ENCODE measurements at regions of chr15 and their contacts with region 1.

Region 1: DNA sequence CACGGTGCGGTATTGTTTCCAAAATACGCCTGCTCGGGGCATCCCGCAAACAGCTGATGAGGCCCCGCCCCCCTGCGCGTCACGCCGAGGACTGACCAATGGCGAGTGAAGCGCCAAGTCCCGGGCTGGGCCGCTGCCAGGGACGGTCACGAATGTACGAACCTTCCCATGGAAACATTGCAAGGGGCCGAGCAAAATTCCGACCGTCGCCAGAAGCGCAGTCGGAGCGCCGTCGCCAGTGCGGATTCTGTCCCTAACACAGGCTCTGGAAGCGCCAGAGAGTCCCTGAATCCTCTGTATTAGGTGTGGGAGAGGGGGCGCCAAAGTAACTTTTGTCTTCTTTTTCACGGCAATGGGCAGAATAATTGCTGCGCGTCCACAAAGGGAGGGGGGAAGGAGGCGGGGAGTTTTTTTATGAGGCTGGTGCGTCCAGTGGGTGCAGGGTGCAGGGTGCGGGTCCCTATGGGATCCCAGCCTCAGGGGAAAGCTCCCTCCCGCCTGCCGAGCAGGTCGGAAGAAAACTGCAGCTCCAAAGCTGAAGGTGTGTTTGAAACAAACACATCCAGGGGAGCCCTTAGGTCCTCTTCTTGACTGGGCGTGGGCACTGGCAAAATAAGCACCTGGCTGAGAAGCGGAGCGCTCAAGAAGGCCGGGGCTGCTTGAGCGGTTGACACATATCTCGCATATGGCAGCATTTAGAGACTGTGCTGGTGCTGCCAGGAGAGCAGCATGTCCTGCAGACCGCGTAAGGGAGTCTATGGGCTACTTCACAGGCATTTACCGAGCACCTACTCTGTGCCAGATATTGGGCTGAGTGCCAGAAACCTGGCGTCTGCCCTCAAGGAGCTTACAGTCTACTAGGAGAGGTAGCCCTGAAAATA is at the start of gene BMF:
- DNase-seq: peak; percentile 97
- ATAC-seq: peak; percentile 49
- H3K4me3 Mint-ChIP-seq: peak within 1 kb of the TSS; percentile 94
- H3K27ac Mint-ChIP-seq: peak within 1 kb of the TSS; percentile 92
- H3K4me1 Mint-ChIP-seq: peaks cover 60% of the 10 kb centered on the region
- H3K27me3 Mint-ChIP-seq: no peaks in the 10 kb centered on the region
- CTCF ChIP-seq: no peak
- total RNA-seq, gene BMF: 353 and 376 TPM in 2 replicates

Region 2: DNA sequence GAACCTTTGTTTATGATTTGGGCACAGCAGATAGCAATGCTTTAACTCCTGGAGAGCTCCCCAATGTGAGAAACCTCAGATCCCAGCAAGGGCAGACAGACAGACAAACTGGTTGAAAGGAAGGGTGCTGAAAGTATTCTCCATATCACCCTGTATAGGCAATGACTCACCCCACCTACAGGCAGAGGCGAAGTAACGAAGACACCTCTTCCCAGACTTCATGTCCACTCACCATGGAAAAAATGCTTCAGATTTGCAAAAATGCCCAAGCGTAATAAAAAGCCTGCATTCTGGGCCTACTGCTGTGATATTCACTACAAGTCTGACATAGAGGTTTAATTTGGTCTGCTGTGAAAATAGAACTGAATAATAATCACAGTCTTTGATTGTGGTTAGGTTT is 477.7 kb before region 1 on chr15:
- CTCF ChIA-PET with region 1: no interaction called
- POLR2A ChIA-PET with region 1: no interaction called
- intact Hi-C with region 1: no loop called
- DNase-seq: no peak
- ATAC-seq: no peak
- H3K4me3 Mint-ChIP-seq: no peak overlapping the region
- H3K27ac Mint-ChIP-seq: no peak overlapping the region
- H3K4me1 Mint-ChIP-seq: no peaks in the 10 kb centered on the region
- H3K27me3 Mint-ChIP-seq: no peaks in the 10 kb centered on the region
- CTCF ChIP-seq: no peak

Region 3: DNA sequence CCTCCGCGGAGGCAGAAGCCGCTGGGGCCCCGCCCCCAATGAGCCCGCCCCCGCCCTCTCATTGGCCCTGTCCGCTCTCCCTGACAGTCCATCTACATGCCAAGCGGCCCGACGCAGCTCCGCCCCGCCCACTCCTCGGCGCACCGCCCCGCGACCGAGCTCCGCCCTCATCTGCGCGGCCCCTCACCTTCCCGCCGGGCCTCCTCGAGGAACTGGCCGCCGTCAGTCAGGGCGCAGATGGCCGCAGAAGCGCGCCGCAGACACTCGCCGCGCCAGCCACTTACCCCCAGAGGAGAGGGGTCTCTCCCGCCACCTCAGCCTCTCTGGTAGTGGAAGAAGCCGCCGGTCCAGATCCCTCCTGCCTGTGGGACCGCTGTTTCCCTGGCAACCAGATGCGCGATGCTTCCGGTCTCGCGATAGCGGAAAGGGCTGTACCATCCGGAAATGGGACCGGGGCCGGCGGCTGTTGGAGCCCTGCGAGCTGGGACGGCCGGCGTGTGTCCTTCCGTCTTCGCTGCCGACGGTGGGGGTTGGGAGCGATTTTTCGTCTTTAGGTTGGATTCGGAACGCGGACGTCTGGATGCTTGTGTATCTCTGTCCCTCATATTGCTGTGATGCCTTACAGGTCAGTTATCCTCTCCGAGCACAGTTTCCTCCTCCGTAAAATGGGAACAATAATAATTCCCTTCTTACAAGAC is 326.5 kb before region 1 on chr15 and contains the start of gene FSIP1:
- CTCF ChIA-PET with region 1: no interaction called
- POLR2A ChIA-PET with region 1: interaction called, 7 read pairs
- intact Hi-C with region 1: loop called (anchors 1 kb)
- DNase-seq: peak; percentile 98
- ATAC-seq: peak; percentile 98
- H3K4me3 Mint-ChIP-seq: peak within 1 kb of the TSS; percentile 98
- H3K27ac Mint-ChIP-seq: peak within 1 kb of the TSS; percentile 91
- H3K4me1 Mint-ChIP-seq: peaks cover 41% of the 10 kb centered on the region
- H3K27me3 Mint-ChIP-seq: peaks cover 4% of the 10 kb centered on the region
- CTCF ChIP-seq: no peak
- total RNA-seq, gene FSIP1: 0.32 and 0.53 TPM in 2 replicates

Region 4: DNA sequence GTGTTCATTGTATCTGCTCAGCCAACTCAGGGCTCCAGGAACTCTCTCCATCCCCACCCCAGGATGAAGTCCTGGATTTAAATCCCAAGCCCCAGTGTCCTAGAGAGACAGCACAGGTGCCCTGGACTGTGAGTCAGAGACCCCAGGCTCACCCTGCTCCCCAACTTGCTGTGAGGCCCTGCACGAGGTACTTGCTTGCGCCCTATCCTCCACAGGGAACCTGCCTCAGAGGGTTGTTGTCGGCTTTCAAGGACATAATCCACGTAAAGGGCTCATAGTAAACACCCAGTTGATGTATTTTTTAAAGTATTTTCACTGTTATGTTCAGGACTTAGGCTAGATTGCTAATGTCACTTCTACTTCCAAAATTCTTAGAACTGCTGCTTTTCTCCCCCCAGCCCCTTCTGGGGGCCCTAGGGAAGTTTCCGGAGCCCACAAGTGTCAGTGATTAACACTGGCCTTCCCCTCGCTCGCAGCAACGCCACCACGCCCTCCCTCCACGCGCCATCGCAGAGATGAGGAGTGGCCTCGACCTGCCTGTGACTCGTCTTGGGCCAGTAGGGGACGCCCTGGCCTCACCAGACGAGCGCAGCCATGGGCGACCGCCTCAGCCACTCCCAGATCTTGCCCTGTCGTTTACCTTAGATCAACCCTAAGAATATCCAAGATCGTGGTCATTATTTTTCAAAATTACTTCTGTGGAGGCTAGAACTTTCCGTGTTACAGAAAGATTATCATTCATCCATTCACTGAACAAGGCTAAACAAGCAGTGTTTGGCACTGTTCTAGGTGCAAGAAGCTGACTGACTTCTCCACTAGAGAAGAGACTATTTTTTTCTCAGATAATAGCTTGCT is 64.2 kb before region 1 on chr15:
- CTCF ChIA-PET with region 1: interaction called, 519 read pairs
- POLR2A ChIA-PET with region 1: interaction called, 1,329 read pairs
- intact Hi-C with region 1: loop called (anchors 1 kb)
- DNase-seq: peak; percentile 77
- ATAC-seq: peak; percentile 87
- H3K4me3 Mint-ChIP-seq: peak overlapping the region; percentile 46
- H3K27ac Mint-ChIP-seq: peak overlapping the region; percentile 93
- H3K4me1 Mint-ChIP-seq: peaks cover 64% of the 10 kb centered on the region
- H3K27me3 Mint-ChIP-seq: no peaks in the 10 kb centered on the region
- CTCF ChIP-seq: peak; percentile 58

Region 5: GRCh38 chr15:40069178-40070165 is 39.6 kb before region 1 on chr15:
- CTCF ChIA-PET with region 1: interaction called, 9 read pairs
- POLR2A ChIA-PET with region 1: interaction called, 504 read pairs
- intact Hi-C with region 1: loop called (anchors 1 kb)
- DNase-seq: peak; percentile 59
- ATAC-seq: peak; percentile 76
- H3K4me3 Mint-ChIP-seq: peak overlapping the region; percentile 60
- H3K27ac Mint-ChIP-seq: peak overlapping the region; percentile 83
- H3K4me1 Mint-ChIP-seq: peaks cover 48% of the 10 kb centered on the region
- H3K27me3 Mint-ChIP-seq: no peaks in the 10 kb centered on the region
- CTCF ChIP-seq: no peak

Region 6: GRCh38 chr15:40098489-40099261 is 10.4 kb before region 1 on chr15:
- CTCF ChIA-PET with region 1: interaction called, 98 read pairs
- POLR2A ChIA-PET with region 1: interaction called, 422 read pairs
- intact Hi-C with region 1: loop called (anchors 1 kb)
- DNase-seq: peak; percentile 74
- ATAC-seq: peak; percentile 78
- H3K4me3 Mint-ChIP-seq: peak overlapping the region; percentile 77
- H3K27ac Mint-ChIP-seq: peak overlapping the region; percentile 99
- H3K4me1 Mint-ChIP-seq: peaks cover 98% of the 10 kb centered on the region
- H3K27me3 Mint-ChIP-seq: no peaks in the 10 kb centered on the region
- CTCF ChIP-seq: no peak

Region 7: DNA sequence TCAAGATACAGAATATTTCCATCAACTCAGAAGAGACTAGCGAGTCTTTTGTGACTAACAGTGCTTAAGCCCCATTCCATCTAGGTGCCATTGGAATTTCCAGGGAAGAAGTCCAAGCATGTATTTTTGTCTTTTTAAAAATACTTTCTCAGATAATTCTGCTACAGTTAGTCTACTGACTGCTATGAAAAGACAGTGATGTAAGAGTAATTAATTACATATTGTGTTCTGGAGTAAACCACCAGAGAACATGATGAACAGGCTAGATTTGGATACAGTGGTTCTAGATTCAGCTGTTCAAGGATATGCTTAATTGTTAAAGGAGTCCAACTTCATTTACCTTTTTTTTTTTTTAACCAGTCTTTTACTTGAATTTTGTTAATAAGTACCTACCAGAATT is 95.0 kb after region 1 on chr15:
- CTCF ChIA-PET with region 1: no interaction called
- POLR2A ChIA-PET with region 1: interaction called, 20 read pairs
- intact Hi-C with region 1: no loop called
- DNase-seq: no peak
- ATAC-seq: no peak
- H3K4me3 Mint-ChIP-seq: no peak overlapping the region
- H3K27ac Mint-ChIP-seq: no peak overlapping the region
- H3K4me1 Mint-ChIP-seq: no peaks in the 10 kb centered on the region
- H3K27me3 Mint-ChIP-seq: no peaks in the 10 kb centered on the region
- CTCF ChIP-seq: no peak

Region 8: DNA sequence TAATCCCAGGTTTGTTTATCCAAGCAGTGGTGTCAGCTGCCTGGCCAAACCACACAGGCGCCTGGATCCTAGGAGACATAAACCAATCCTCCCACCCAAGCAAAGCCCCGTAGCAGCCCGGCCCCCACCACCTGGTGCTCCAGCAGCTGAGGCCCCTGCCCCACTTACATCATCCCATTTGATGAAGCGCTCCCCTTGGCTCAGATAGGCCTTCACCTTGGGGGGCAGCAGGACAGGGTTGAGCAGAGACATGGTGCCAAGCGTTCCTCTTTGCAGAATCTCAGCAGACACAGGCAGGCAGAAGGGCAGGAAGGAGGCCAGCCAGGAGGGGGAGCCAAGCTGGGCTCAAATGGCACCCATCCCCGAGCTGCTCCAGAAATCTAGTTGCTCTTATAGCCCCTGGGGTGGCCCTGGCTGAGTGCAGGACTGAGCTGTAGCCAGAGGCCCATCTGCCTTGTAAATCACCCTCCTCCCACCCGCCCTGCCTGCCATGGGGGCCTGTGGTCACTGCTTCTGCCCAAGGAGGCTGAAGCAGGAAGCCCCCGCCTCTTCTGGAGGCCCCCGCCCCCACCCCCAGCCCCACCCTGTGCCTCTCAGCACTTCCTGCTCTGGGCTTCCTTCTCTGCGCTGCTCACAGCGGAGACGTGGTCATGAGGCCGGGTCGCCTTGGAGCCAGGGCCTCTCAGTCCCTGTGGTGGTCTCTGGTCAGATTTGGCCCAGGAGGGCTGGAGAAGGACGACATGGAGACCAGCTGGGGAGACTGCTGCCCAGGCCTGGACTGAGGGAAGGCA is 198.5 kb after region 1 on chr15 and contains the start of gene PLCB2:
- CTCF ChIA-PET with region 1: interaction called, 13 read pairs
- POLR2A ChIA-PET with region 1: interaction called, 20 read pairs
- intact Hi-C with region 1: no loop called
- DNase-seq: peak; percentile 67
- ATAC-seq: peak; percentile 77
- H3K4me3 Mint-ChIP-seq: peak within 1 kb of the TSS; percentile 93
- H3K27ac Mint-ChIP-seq: peak within 1 kb of the TSS; percentile 96
- H3K4me1 Mint-ChIP-seq: peaks cover 44% of the 10 kb centered on the region
- H3K27me3 Mint-ChIP-seq: no peaks in the 10 kb centered on the region
- CTCF ChIP-seq: no peak
- total RNA-seq, gene PLCB2: 109 and 126 TPM in 2 replicates